ENCODE measurements at regions of chr2 and their contacts with region 1.

Region 1: DNA sequence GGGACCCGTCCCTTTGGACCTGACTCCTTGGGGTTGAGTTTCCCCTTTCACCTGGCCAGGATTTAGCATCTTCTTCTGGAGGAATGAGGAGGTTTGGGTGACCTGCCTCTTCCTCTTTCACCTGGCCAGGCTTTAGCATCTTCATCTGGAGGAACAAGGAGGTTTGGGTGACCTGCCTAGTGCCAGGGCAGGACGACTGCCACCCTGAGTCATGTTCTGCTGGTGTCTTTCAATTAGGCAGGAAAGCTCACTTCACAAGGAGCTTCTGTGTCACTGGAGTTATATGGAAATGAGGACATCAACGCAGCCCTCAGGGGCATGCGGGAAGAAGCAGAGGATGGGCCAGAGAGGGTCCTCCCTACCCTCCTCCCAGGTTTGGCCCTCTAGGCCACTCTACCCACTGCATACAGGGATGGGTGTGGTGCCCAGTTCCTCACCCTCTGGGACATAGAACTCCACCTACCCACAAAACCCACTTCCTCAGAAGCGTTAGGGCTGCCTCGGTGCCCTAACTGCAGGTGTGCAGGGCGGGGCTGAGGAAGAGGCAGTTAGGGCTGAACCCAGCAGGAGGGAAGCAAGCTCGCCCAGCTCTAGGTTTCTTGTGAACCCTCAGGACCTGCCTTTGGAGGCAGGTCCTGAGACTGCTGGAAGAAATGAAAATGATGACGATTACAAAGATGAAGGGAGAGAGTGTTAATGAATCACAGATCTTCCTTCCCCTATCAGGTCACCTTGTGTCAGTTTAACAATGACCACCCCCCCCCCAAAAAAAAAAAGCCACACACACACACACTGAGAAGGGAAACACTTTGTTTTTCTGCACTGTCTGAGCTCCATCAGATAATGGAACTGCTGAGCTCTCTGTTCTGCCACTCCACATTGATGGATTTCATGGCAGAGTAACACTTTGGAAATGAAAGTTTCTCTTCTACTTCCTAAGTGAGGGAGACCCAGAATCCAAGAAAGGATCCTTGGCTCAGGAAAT is 71.0 kb downstream of the ARL4C start:
- DNase-seq: peak; percentile 75
- H3K4me3 Mint-ChIP-seq: peak overlapping the region; percentile 75
- H3K27ac Mint-ChIP-seq: peak overlapping the region; percentile 99
- H3K4me1 Mint-ChIP-seq: peaks cover 77% of the 10 kb centered on the region
- H3K27me3 Mint-ChIP-seq: no peaks in the 10 kb centered on the region

Region 2: DNA sequence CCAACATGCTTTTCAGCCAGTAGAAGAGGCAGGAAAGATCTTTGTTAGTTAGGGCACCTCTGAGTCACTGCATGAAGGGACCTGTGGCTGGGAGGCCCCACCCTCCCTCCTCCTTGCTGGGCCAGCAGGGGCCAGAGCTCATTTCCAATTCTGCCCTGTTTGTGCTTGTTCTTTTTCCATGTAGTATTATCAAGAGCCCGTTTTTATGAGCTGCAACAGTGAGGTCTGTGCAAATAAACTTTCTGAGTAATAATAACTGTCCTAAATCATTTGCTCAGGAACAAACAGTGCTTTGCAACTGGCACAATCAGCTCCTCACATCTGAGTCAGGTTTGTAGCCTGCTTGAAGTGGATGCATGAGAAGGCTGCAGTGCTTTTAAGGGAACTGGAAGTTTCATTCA is 57.0 kb before region 1 on chr2:
- intact Hi-C with region 1: loop called (anchors 2 kb)
- DNase-seq: peak; percentile 35
- H3K4me3 Mint-ChIP-seq: peak overlapping the region; percentile 54
- H3K27ac Mint-ChIP-seq: peak overlapping the region; percentile 84
- H3K4me1 Mint-ChIP-seq: peaks cover 76% of the 10 kb centered on the region
- H3K27me3 Mint-ChIP-seq: no peaks in the 10 kb centered on the region

Region 3: GRCh38 chr2:234388554-234388953 is 37.4 kb before region 1 on chr2:
- intact Hi-C with region 1: no loop called
- DNase-seq: no peak
- H3K4me3 Mint-ChIP-seq: no peak overlapping the region
- H3K27ac Mint-ChIP-seq: no peak overlapping the region
- H3K4me1 Mint-ChIP-seq: peaks cover 23% of the 10 kb centered on the region
- H3K27me3 Mint-ChIP-seq: peaks cover 4% of the 10 kb centered on the region

Region 4: DNA sequence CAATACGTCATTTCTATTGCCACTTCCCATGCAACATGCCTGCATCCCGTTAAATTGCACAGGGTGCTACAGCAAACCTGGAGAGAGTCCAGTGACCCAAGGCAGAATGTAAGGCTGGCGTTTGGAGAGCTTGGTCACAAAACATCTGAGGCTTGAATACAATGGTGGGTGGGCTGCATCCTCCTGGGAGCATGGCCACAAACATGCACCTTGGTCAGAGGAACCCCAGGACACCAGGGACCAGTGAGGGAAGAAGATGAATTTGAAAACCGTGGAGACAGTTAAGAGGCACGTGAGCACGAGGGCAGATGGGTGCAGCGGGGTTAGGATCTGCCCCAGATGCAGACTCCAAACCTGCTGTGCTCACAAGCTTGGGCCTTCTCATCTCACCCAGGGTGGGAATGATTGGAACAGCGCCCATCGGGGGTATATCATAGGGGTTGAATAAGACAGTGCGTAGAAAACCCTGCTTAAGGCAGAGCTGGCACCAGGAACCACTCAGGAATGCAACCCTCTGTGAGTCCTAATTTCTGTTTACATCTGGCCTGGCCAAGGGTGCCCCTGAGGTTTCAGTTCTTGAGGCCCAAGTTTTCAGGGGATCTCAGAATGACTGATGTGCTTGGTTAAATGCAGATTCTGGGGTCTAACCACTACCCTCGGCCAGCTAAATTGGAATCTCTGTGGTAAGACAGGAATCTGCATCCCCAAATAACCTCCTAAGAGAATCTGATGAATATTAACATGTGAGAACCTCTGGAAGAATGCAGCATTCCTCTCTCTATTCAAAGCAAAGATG is 26.3 kb before region 1 on chr2:
- intact Hi-C with region 1: loop called (anchors 2 kb)
- DNase-seq: no peak
- H3K4me3 Mint-ChIP-seq: peak overlapping the region; percentile 16
- H3K27ac Mint-ChIP-seq: peak overlapping the region; percentile 9
- H3K4me1 Mint-ChIP-seq: peaks cover 52% of the 10 kb centered on the region
- H3K27me3 Mint-ChIP-seq: no peaks in the 10 kb centered on the region

Region 5: GRCh38 chr2:234555720-234556119 is 129.8 kb after region 1 on chr2:
- intact Hi-C with region 1: no loop called
- DNase-seq: no peak
- H3K4me3 Mint-ChIP-seq: no peak overlapping the region
- H3K27ac Mint-ChIP-seq: no peak overlapping the region
- H3K4me1 Mint-ChIP-seq: no peaks in the 10 kb centered on the region
- H3K27me3 Mint-ChIP-seq: peaks cover 6% of the 10 kb centered on the region